Panc1 (cell line): ENCODE measurements at regions of chr1 and their contacts with region 1.

Region 1: GRCh38 chr1:86035101-86035500 is 121.5 kb downstream of the COL24A1 start:
- DNase-seq: no peak
- ATAC-seq: no peak
- H3K4me3 ChIP-seq: no peak overlapping the region
- H3K27ac ChIP-seq: no peak overlapping the region
- H3K4me1 ChIP-seq: no peaks in the 10 kb centered on the region
- H3K27me3 ChIP-seq: peaks cover 18% of the 10 kb centered on the region
- CTCF ChIP-seq: no peak

Region 2: DNA sequence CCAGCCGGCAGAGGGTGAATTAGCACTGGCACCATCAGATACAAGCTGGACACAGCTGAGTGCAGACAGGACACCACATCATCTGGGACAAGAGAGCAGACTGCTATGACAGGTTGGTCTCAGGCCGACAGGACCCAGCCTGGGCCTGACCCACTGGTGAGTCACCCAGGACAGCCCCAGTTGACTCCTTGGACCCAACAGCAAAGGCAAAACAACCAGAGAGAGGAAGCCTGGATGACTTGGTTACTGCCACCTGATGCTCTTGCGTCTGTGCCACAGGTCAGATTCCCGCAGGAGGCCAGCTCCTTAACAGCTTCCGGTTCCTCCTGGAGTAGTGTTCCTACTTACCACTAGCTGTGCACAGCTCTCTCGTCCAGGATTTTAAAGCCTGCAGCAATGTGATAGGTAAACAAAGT is 436.0 kb before region 1 on chr1:
- CTCF ChIA-PET with region 1: no interaction called
- POLR2A ChIA-PET with region 1: interaction called, 13 read pairs
- in situ Hi-C with region 1: no loop called
- intact Hi-C with region 1: no loop called
- DNase-seq: no peak
- ATAC-seq: peak; percentile 72
- H3K4me3 ChIP-seq: no peak overlapping the region
- H3K27ac ChIP-seq: peak overlapping the region; percentile 58
- H3K4me1 ChIP-seq: peaks cover 25% of the 10 kb centered on the region
- H3K27me3 ChIP-seq: no peaks in the 10 kb centered on the region
- CTCF ChIP-seq: no peak

Region 3: DNA sequence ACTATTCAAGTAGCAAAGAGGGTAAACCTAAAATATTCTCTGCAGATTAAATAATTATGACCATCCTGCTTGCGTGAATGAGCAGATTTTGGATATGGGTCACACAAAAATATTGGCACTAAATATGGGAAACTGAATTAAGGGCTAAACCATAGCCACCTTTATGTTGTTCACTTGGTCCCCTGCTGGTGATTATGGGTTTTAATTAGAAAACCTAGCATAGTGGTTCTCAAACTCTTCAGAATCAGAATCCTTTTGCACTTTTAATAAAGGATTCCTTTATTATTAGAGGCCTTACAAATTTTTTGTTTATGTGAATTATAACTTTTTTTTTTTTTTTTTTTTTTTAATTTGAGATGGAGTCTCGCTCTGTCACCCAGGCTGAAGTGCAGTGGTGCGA is 288.3 kb before region 1 on chr1:
- CTCF ChIA-PET with region 1: no interaction called
- POLR2A ChIA-PET with region 1: no interaction called
- in situ Hi-C with region 1: no loop called
- intact Hi-C with region 1: no loop called
- DNase-seq: no peak
- ATAC-seq: no peak
- H3K4me3 ChIP-seq: no peak overlapping the region
- H3K27ac ChIP-seq: no peak overlapping the region
- H3K4me1 ChIP-seq: no peaks in the 10 kb centered on the region
- H3K27me3 ChIP-seq: no peaks in the 10 kb centered on the region
- CTCF ChIP-seq: peak; percentile 29; the same call in 1 of the 2 replicates

Region 4: DNA sequence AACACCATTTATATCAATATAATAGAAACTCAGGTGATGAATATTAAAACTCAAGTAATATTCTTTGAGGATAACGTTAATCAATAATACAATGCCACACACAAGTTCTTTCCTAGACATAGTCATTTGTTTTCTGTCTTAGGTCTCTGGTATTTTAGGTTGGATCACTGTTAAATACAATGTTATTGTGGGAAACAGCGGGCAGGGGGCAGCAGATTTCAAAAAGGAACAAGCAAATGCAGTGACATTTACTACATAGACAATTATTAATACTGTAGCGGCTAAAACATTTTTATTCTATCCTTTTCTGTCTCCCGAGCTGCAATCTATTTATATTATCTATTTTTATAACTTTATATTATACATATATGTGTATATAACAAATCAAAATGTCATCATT is 140.4 kb before region 1 on chr1:
- CTCF ChIA-PET with region 1: no interaction called
- POLR2A ChIA-PET with region 1: no interaction called
- in situ Hi-C with region 1: no loop called
- intact Hi-C with region 1: no loop called
- DNase-seq: peak; percentile 33
- ATAC-seq: peak; percentile 79; the same call in 1 of the 2 replicates
- H3K4me3 ChIP-seq: no peak overlapping the region
- H3K27ac ChIP-seq: no peak overlapping the region
- H3K4me1 ChIP-seq: no peaks in the 10 kb centered on the region
- H3K27me3 ChIP-seq: no peaks in the 10 kb centered on the region
- CTCF ChIP-seq: peak; percentile 75; the same call in 1 of the 2 replicates

Region 5: GRCh38 chr1:86085741-86086409 is 50.8 kb after region 1 on chr1:
- CTCF ChIA-PET with region 1: no interaction called
- POLR2A ChIA-PET with region 1: no interaction called
- in situ Hi-C with region 1: no loop called
- intact Hi-C with region 1: loop called (anchors 5 kb)
- DNase-seq: no peak
- ATAC-seq: no peak
- H3K4me3 ChIP-seq: no peak overlapping the region
- H3K27ac ChIP-seq: no peak overlapping the region
- H3K4me1 ChIP-seq: no peaks in the 10 kb centered on the region
- H3K27me3 ChIP-seq: peaks cover under 1% of the 10 kb centered on the region; the same call in 1 of the 2 replicates
- CTCF ChIP-seq: no peak